IMR-90 (cell line): ENCODE measurements at regions of chr2 and their contacts with region 1.

Region 1: DNA sequence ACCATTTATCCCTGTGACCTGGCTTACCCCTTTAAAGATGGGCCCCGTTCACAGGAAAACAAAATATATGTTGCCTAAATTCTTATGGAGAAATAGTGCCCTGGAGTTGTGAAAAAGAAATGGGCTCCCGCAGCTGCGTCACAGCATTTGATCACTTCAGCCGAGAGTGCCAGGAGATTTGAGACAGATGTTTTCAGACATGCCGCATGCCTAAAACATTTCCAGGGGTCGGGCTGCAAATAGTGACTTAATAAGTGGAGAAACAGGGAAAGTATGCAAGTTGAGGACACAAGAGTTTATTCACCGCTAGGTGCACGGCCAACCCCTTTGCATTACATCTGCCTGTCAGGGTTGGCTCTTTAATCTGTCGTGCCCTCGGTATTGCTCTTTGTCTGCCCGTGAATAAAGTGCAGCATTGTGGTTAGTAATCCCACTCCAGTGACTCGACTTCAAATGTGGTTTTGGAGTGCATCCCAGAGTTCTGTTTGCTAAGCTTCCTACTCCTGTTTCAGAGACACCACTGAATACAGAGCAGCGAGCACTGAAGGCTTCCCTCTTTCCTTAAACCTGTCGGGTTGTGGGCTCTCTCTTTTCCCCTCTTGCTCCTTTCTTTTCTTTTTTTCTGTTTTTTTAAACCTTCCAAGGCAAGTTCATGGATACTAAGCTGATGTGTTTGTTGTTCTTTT is 187.5 kb downstream of the LTBP1 start:
- DNase-seq: peak; percentile 99
- ATAC-seq: peak; percentile 79
- H3K4me3 ChIP-seq: peak overlapping the region; percentile 74
- H3K27ac ChIP-seq: peak overlapping the region; percentile 92
- H3K4me1 ChIP-seq: peaks cover 20% of the 10 kb centered on the region
- H3K27me3 ChIP-seq: no peaks in the 10 kb centered on the region
- CTCF ChIP-seq: peak; percentile 30; the same call in 1 of the 2 replicates
- POLR2A ChIP-seq: peak; percentile 93
- RAD21 ChIP-seq: no peak; the same call in none of the 2 replicates

Region 2: GRCh38 chr2:32772638-32773447 is 361.4 kb before region 1 on chr2:
- CTCF ChIA-PET with region 1: no interaction called
- POLR2A ChIA-PET with region 1: no interaction called
- dilution Hi-C with region 1: no loop called
- in situ Hi-C with region 1: no loop called
- intact Hi-C with region 1: loop called (anchors 1 kb)
- DNase-seq: peak; percentile 76
- ATAC-seq: peak; percentile 95
- H3K4me3 ChIP-seq: no peak overlapping the region
- H3K27ac ChIP-seq: no peak overlapping the region
- H3K4me1 ChIP-seq: peaks cover 7% of the 10 kb centered on the region; the same call in 1 of the 2 replicates
- H3K27me3 ChIP-seq: no peaks in the 10 kb centered on the region
- CTCF ChIP-seq: peak; percentile 85
- POLR2A ChIP-seq: no peak
- RAD21 ChIP-seq: peak; percentile 95

Region 3: DNA sequence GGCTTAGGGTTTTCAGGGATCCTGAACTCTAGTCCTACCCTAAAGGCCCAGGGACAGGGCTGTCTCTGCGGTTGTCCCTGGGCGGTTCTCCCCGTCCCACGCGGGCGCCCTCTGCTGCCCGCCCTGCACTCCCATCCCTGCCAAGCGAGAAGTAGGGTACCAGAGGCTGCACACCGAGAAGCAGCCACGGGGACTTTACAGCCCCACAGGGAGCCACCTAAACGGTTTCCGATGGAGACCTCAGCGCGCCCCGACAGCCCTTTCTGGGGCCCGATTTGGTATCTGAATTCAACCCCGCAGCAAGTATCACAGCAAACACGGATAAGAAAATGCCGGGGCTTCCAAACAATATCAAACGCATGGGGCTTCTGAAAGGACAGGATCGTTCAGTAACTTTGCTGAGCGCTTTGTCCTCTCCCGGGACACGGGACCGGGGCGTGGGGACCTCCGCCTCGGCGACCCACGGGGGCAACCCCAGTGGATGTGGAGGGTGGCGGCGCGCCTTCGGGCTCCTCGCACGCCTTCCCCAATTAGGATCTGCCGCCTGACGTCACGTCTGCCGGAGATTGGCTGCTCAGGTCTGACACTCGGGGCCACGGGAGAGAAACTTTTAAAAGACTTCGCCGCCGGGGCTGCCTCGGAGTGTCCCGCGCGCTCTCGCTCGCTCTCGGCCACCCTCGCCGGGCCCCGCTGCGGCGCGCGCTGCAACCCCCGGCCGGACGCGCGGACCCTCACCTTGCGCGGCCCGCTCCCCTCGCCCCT is 187.7 kb before region 1 on chr2 and contains the start of gene LTBP1:
- CTCF ChIA-PET with region 1: no interaction called
- POLR2A ChIA-PET with region 1: no interaction called
- dilution Hi-C with region 1: no loop called
- in situ Hi-C with region 1: loop called (anchors 10 kb)
- intact Hi-C with region 1: loop called (anchors 1 kb)
- DNase-seq: peak; percentile 76
- ATAC-seq: peak; percentile 77
- H3K4me3 ChIP-seq: peak within 1 kb of the TSS; percentile 61
- H3K27ac ChIP-seq: peak within 1 kb of the TSS; percentile 83
- H3K4me1 ChIP-seq: peaks cover 7% of the 10 kb centered on the region; the same call in 1 of the 2 replicates
- H3K27me3 ChIP-seq: no peaks in the 10 kb centered on the region
- CTCF ChIP-seq: peak; percentile 82
- POLR2A ChIP-seq: peak; percentile 81
- RAD21 ChIP-seq: peak; percentile 79
- total RNA-seq, gene LTBP1: 297 and 326 TPM in 2 replicates

Region 4: DNA sequence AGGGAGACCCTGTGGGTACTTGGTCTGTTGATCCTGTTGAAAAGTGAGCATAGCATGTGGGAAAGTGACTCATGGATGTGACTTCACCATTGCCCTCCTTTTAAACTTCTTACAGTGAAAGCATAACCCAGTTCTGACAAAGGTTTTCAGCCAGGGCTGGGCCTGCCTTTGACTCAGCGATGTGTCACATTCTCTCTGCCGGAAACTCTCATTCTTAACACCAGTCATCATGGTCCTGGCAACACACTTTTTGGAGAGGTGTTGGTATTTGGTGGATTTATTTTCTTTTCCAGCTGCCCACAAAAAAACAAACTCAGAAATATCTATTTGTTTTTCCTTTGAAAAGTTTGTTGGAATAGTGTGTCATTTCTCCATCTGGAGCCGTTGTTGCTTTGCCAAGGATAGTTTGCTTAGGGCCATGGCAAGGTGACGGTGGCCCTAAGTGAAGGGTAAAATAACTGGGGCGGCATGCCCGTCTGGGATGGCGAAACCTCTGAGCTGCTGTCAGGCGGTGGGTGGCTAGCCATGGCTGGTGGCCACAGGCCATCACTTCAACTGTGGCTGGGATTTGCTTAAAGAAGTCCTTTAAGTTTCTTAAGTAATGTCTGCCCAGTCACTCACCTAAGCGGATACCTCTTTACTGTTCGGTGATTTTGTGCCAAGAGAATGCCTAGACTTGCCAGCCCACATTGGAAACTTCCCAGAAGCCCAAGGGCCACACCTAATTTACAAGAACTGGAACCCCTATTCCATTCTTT is 64.2 kb before region 1 on chr2:
- CTCF ChIA-PET with region 1: interaction called, 3 read pairs
- POLR2A ChIA-PET with region 1: no interaction called
- dilution Hi-C with region 1: no loop called
- in situ Hi-C with region 1: no loop called
- intact Hi-C with region 1: loop called (anchors 1 kb)
- DNase-seq: peak; percentile 100
- ATAC-seq: peak; percentile 87
- H3K4me3 ChIP-seq: no peak overlapping the region
- H3K27ac ChIP-seq: peak overlapping the region; percentile 65
- H3K4me1 ChIP-seq: peaks cover 21% of the 10 kb centered on the region
- H3K27me3 ChIP-seq: no peaks in the 10 kb centered on the region
- CTCF ChIP-seq: no peak
- POLR2A ChIP-seq: no peak
- RAD21 ChIP-seq: peak; percentile 17; the same call in 1 of the 2 replicates

Region 5: DNA sequence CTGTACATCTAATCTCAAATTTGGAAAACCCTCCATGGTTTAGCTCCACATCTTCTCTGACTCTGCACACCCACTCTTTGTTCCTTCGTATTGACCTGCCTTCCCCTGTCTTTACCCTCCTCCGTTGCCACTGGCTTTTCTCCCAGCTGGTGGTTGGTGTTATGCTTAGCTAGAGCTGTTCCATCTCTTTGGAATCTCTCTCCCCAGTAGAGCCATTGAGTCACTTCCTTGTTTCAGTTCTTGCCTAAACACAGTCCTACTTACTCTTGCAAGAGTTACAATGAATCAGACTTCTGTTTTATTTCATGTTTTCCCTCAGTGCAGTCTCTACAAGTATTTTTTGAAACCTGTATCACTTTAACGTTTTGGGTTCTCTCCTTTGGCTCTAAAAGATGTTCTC is 76.4 kb after region 1 on chr2:
- CTCF ChIA-PET with region 1: no interaction called
- POLR2A ChIA-PET with region 1: no interaction called
- dilution Hi-C with region 1: no loop called
- in situ Hi-C with region 1: no loop called
- intact Hi-C with region 1: loop called (anchors 1 kb)
- DNase-seq: peak; percentile 99
- ATAC-seq: peak; percentile 71
- H3K4me3 ChIP-seq: no peak overlapping the region
- H3K27ac ChIP-seq: peak overlapping the region; percentile 92; the same call in 1 of the 2 replicates
- H3K4me1 ChIP-seq: peaks cover 36% of the 10 kb centered on the region
- H3K27me3 ChIP-seq: no peaks in the 10 kb centered on the region
- CTCF ChIP-seq: no peak
- POLR2A ChIP-seq: 0 out of 2 replicates have a peak, but pooled peaks have one; percentile 32
- RAD21 ChIP-seq: peak; percentile 33

Region 6: GRCh38 chr2:33583194-33583938 is 449.1 kb after region 1 on chr2:
- CTCF ChIA-PET with region 1: no interaction called
- POLR2A ChIA-PET with region 1: no interaction called
- dilution Hi-C with region 1: no loop called
- in situ Hi-C with region 1: no loop called
- intact Hi-C with region 1: loop called (anchors 10 kb)
- DNase-seq: peak; percentile 52
- ATAC-seq: peak; percentile 77
- H3K4me3 ChIP-seq: no peak overlapping the region
- H3K27ac ChIP-seq: no peak overlapping the region
- H3K4me1 ChIP-seq: peaks cover 2% of the 10 kb centered on the region; the same call in 1 of the 2 replicates
- H3K27me3 ChIP-seq: no peaks in the 10 kb centered on the region
- CTCF ChIP-seq: peak; percentile 83
- POLR2A ChIP-seq: no peak
- RAD21 ChIP-seq: peak; percentile 87